Endothelial cell of umbilical vein (primary cell): ENCODE measurements at regions of chr7 and their contacts with region 1.

Region 1: GRCh38 chr7:8217200-8218068 is 44.5 kb downstream of the ICA1 start:
- DNase-seq: peak; percentile 67
- H3K4me3 ChIP-seq: no peak overlapping the region
- H3K27ac ChIP-seq: no peak overlapping the region
- H3K4me1 ChIP-seq: no peaks in the 10 kb centered on the region
- H3K27me3 ChIP-seq: no peaks in the 10 kb centered on the region
- CTCF ChIP-seq: peak; percentile 32 to 40
- POLR2A ChIP-seq: no peak

Region 2: DNA sequence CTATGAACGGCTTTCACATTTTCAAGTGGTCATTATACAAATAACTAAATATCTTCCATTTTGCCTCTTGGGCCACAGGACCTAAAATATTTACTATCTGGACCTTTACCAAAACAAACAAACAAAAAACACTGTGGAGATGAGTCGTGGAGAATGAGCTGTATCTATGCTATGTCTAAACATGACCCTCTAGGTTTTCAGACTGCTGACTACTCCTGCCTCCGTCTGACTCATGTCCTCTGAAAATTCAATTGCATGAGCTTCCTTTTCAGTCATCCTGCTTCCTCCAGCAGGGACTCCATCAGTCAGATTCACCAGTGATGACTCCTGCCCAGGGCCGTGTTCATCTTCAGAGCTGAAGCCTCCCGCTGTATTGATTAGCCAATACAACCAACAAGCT is 778.6 kb before region 1 on chr7:
- CTCF ChIA-PET with region 1: no interaction called
- POLR2A ChIA-PET with region 1: no interaction called
- dilution Hi-C with region 1: no loop called
- intact Hi-C with region 1: loop called (anchors 5 kb)
- DNase-seq: peak; percentile 78
- H3K4me3 ChIP-seq: no peak overlapping the region
- H3K27ac ChIP-seq: peak overlapping the region; percentile 35
- H3K4me1 ChIP-seq: peaks cover 20% of the 10 kb centered on the region
- H3K27me3 ChIP-seq: no peaks in the 10 kb centered on the region
- CTCF ChIP-seq: no peak
- POLR2A ChIP-seq: no peak

Region 3: GRCh38 chr7:7595451-7595850 is 622.0 kb before region 1 on chr7:
- CTCF ChIA-PET with region 1: interaction called, 21 read pairs
- POLR2A ChIA-PET with region 1: no interaction called
- dilution Hi-C with region 1: no loop called
- intact Hi-C with region 1: loop called (anchors 1 kb)
- DNase-seq: peak; percentile 41
- H3K4me3 ChIP-seq: no peak overlapping the region
- H3K27ac ChIP-seq: no peak overlapping the region
- H3K4me1 ChIP-seq: no peaks in the 10 kb centered on the region
- H3K27me3 ChIP-seq: no peaks in the 10 kb centered on the region
- CTCF ChIP-seq: no peak
- POLR2A ChIP-seq: no peak

Region 4: GRCh38 chr7:7662527-7662926 is 554.9 kb before region 1 on chr7:
- CTCF ChIA-PET with region 1: interaction called, 4 read pairs
- POLR2A ChIA-PET with region 1: no interaction called
- dilution Hi-C with region 1: no loop called
- intact Hi-C with region 1: loop called (anchors 1 kb)
- DNase-seq: no peak
- H3K4me3 ChIP-seq: no peak overlapping the region
- H3K27ac ChIP-seq: no peak overlapping the region
- H3K4me1 ChIP-seq: no peaks in the 10 kb centered on the region
- H3K27me3 ChIP-seq: no peaks in the 10 kb centered on the region
- CTCF ChIP-seq: peak in 1 of 2 donors; percentile 5
- POLR2A ChIP-seq: no peak